ENCODE measurements at regions of chr19 and their contacts with region 1.

Region 1: GRCh38 chr19:12666265-12667048 is at the starts of genes MAN2B1 and WDR83:
- DNase-seq: peak; percentile 76 to 84 (median 78)
- H3K4me3 ChIP-seq: peak within 1 kb of the TSS; percentile 93 to 98 (median 96)
- H3K4me3 Mint-ChIP-seq: peak within 1 kb of the TSS; percentile 95 to 98
- H3K27ac ChIP-seq: peak within 1 kb of the TSS; percentile 76 to 100
- H3K27ac Mint-ChIP-seq: peak within 1 kb of the TSS; percentile 94 to 100 (median 97)
- H3K4me1 ChIP-seq: peaks cover 49 to 61% of the 10 kb centered on the region in 2 donors
- H3K4me1 Mint-ChIP-seq: peaks cover 42% of the 10 kb centered on the region
- H3K27me3 ChIP-seq: no peaks in the 10 kb centered on the region
- H3K27me3 Mint-ChIP-seq: peaks cover 0 to 3% (median 2%) of the 10 kb centered on the region in 3 donors
- CTCF ChIP-seq: no peak
- polyA plus RNA-seq, gene MAN2B1: 218 to 305 (median 295) TPM
- polyA plus RNA-seq, gene WDR83: 7.9 to 9.9 (median 8.5) TPM

Region 2: GRCh38 chr19:12162882-12163806 is 503.3 kb before region 1 on chr19 and contains the start of gene ZNF136:
- intact Hi-C with region 1: loop called in 1 of 2 experiments (anchors 10 kb)
- DNase-seq: peak; percentile 89 to 96 (median 93)
- H3K4me3 ChIP-seq: peak within 1 kb of the TSS; percentile 69 to 95 (median 82)
- H3K4me3 Mint-ChIP-seq: peak within 1 kb of the TSS; percentile 97 to 98
- H3K27ac ChIP-seq: peak within 1 kb of the TSS; percentile 94 to 95
- H3K27ac Mint-ChIP-seq: peak within 1 kb of the TSS; percentile 97 to 99 (median 99)
- H3K4me1 ChIP-seq: peaks cover 14 to 16% of the 10 kb centered on the region in 2 donors
- H3K4me1 Mint-ChIP-seq: peaks cover 32% of the 10 kb centered on the region
- H3K27me3 ChIP-seq: no peaks in the 10 kb centered on the region
- H3K27me3 Mint-ChIP-seq: peaks cover 0 to 2% (median 0%) of the 10 kb centered on the region in 3 donors
- CTCF ChIP-seq: no peak
- polyA plus RNA-seq, gene ZNF136: 3.4 to 6.4 (median 5.8) TPM

Region 3: GRCh38 chr19:12345197-12345596 is 321.3 kb before region 1 on chr19:
- intact Hi-C with region 1: no loop called
- DNase-seq: no peak
- H3K4me3 ChIP-seq: no peak overlapping the region
- H3K4me3 Mint-ChIP-seq: no peak overlapping the region
- H3K27ac ChIP-seq: no peak overlapping the region
- H3K27ac Mint-ChIP-seq: no peak overlapping the region
- H3K4me1 ChIP-seq: no peaks in the 10 kb centered on the region
- H3K4me1 Mint-ChIP-seq: no peaks in the 10 kb centered on the region
- H3K27me3 ChIP-seq: no peaks in the 10 kb centered on the region
- H3K27me3 Mint-ChIP-seq: peaks cover 0 to 1% (median 0%) of the 10 kb centered on the region in 3 donors
- CTCF ChIP-seq: no peak

Region 4: DNA sequence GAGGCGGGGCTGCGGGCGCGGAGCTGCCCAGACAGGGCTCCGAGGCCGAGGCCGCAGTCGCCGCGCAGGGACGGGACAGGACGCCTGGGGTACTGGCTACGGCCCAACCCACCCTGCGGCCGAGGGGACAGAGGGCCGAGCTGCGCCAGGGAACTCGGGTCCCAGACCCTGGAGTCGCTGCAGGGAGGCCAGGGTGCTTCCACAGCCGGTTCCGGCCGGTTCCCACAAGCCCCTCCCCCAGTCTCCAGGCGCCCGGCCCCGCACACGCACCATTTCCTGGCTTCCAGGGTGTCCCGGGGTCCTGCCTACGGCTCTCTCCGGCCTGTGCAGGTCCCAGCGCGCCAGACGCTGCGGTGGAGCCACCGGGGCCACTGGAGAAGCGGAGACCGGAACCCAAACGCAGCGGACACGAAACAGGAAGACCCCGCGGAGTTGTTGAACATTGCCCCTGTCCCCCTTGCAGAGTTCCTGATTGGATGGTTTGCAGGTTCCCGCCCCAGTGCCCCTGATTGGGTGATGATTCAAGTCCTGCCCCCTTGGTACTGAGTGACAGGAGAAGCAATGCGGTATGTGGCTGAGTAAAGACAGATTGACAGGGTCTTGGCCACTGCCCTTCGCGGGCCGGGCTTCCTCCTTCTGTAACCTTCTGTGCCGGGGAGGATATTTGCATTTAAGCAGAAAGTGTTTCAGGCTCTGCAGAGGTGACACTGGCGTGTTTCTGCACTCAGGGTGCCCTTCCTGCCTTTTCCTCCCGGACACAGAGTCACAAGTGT is 115.2 kb before region 1 on chr19 and contains the start of gene ZNF564:
- intact Hi-C with region 1: loop called in 1 of 2 experiments (anchors 2 kb)
- DNase-seq: peak; percentile 92 to 96 (median 93)
- H3K4me3 ChIP-seq: peak within 1 kb of the TSS; percentile 64 to 93 (median 83)
- H3K4me3 Mint-ChIP-seq: peak within 1 kb of the TSS; percentile 97 to 99
- H3K27ac ChIP-seq: peak within 1 kb of the TSS; percentile 91 to 93
- H3K27ac Mint-ChIP-seq: peak within 1 kb of the TSS; percentile 91 to 97 (median 96)
- H3K4me1 ChIP-seq: peaks cover 15 to 26% of the 10 kb centered on the region in 2 donors
- H3K4me1 Mint-ChIP-seq: peaks cover 30% of the 10 kb centered on the region
- H3K27me3 ChIP-seq: no peaks in the 10 kb centered on the region
- H3K27me3 Mint-ChIP-seq: peaks cover 0 to 8% (median 7%) of the 10 kb centered on the region in 3 donors
- CTCF ChIP-seq: no peak
- polyA plus RNA-seq, gene ZNF564: 1.0 to 8.4 (median 8.4) TPM

Region 5: GRCh38 chr19:12610540-12611360 is 55.7 kb before region 1 on chr19 and contains the starts of genes ZNF490 and ZNF791:
- intact Hi-C with region 1: loop called (anchors 5 to 10 kb)
- DNase-seq: peak; percentile 94 to 98 (median 95)
- H3K4me3 ChIP-seq: peak within 1 kb of the TSS; percentile 92 to 98 (median 94)
- H3K4me3 Mint-ChIP-seq: peak within 1 kb of the TSS; percentile 96 to 99
- H3K27ac ChIP-seq: peak within 1 kb of the TSS; percentile 86 to 94
- H3K27ac Mint-ChIP-seq: peak within 1 kb of the TSS; percentile 96 to 100 (median 98)
- H3K4me1 ChIP-seq: peaks cover 37 to 40% of the 10 kb centered on the region in 2 donors
- H3K4me1 Mint-ChIP-seq: peaks cover 37% of the 10 kb centered on the region
- H3K27me3 ChIP-seq: no peaks in the 10 kb centered on the region
- H3K27me3 Mint-ChIP-seq: peaks cover 2 to 6% (median 4%) of the 10 kb centered on the region in 3 donors
- CTCF ChIP-seq: no peak
- polyA plus RNA-seq, gene ZNF490: 2.3 to 4.2 (median 2.7) TPM
- polyA plus RNA-seq, gene ZNF791: 5.2 to 8.2 (median 5.9) TPM

Region 6: GRCh38 chr19:12681074-12681951 is 14.9 kb after region 1 on chr19 and contains the start of gene DHPS:
- intact Hi-C with region 1: loop called in 1 of 2 experiments (anchors 2 kb)
- DNase-seq: peak; percentile 97 to 99 (median 98)
- H3K4me3 ChIP-seq: peak within 1 kb of the TSS; percentile 70 to 88 (median 70)
- H3K4me3 Mint-ChIP-seq: peak within 1 kb of the TSS; percentile 96 to 98
- H3K27ac ChIP-seq: peak within 1 kb of the TSS; percentile 93 to 94
- H3K27ac Mint-ChIP-seq: peak within 1 kb of the TSS; percentile 93 to 99 (median 97)
- H3K4me1 ChIP-seq: peaks cover 16 to 26% of the 10 kb centered on the region in 2 donors
- H3K4me1 Mint-ChIP-seq: peaks cover 19% of the 10 kb centered on the region
- H3K27me3 ChIP-seq: no peaks in the 10 kb centered on the region
- H3K27me3 Mint-ChIP-seq: peaks cover 0 to 6% (median 0%) of the 10 kb centered on the region in 3 donors
- CTCF ChIP-seq: no peak
- polyA plus RNA-seq, gene DHPS: 51.0 to 130 (median 53.4) TPM

Region 7: DNA sequence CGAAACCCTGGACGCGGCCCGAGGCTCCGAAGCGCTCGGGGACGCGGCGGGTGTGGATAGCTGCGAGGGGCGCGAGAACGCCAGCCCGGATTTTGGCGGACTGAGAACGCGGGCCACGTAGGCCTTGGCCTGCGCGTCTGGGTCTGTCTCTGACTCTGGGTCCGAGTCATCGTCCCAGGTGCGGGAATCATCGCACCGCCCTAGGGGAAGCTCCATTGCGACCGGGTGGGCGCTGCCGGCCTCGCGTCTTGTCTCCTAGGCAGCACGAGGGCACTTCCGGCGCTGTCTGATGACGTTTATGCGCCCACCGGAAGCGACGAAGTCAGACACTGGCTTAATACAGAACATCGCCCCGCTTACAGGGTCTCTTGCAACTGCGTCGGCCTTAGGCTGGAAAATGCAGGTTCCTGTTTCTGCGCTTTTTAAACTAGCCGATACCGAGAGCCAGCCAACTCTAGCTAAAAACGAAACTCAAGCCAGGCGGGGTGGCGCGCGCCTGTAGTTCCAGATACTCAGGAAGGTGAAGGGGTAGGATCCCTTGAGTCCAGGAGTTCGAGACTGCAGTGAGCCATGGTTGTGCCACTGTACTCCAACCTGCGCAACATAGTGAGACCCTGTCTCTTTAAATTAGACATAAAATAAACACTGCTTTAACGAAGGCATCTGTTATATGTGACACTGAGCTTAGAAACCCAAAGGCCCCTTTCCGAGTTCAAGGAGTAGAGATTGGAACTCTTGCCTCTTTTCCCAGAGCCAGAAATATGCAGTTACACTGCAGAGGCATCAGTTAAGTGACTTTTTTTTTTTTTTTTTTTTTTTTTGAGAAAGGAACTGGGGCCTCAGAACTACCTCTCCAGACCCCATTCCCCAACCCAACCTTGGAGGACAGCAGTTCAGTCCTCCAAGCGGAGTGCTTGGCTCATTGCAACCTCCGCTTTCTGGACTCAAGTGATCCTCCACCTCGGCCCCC is 30.2 kb after region 1 on chr19 and contains the start of gene FBXW9:
- intact Hi-C with region 1: loop called in 1 of 2 experiments (anchors 1 kb)
- DNase-seq: peak; percentile 98
- H3K4me3 ChIP-seq: peak within 1 kb of the TSS; percentile 63 to 95 (median 84)
- H3K4me3 Mint-ChIP-seq: peak within 1 kb of the TSS; percentile 82 to 93
- H3K27ac ChIP-seq: peak within 1 kb of the TSS; percentile 90 to 95
- H3K27ac Mint-ChIP-seq: peak within 1 kb of the TSS; percentile 92 to 98 (median 96)
- H3K4me1 ChIP-seq: peaks cover 29 to 32% of the 10 kb centered on the region in 2 donors
- H3K4me1 Mint-ChIP-seq: peaks cover 17% of the 10 kb centered on the region
- H3K27me3 ChIP-seq: no peaks in the 10 kb centered on the region
- H3K27me3 Mint-ChIP-seq: no peaks in the 10 kb centered on the region
- CTCF ChIP-seq: no peak
- polyA plus RNA-seq, gene FBXW9: 4.4 to 7.2 (median 5.1) TPM

Region 8: DNA sequence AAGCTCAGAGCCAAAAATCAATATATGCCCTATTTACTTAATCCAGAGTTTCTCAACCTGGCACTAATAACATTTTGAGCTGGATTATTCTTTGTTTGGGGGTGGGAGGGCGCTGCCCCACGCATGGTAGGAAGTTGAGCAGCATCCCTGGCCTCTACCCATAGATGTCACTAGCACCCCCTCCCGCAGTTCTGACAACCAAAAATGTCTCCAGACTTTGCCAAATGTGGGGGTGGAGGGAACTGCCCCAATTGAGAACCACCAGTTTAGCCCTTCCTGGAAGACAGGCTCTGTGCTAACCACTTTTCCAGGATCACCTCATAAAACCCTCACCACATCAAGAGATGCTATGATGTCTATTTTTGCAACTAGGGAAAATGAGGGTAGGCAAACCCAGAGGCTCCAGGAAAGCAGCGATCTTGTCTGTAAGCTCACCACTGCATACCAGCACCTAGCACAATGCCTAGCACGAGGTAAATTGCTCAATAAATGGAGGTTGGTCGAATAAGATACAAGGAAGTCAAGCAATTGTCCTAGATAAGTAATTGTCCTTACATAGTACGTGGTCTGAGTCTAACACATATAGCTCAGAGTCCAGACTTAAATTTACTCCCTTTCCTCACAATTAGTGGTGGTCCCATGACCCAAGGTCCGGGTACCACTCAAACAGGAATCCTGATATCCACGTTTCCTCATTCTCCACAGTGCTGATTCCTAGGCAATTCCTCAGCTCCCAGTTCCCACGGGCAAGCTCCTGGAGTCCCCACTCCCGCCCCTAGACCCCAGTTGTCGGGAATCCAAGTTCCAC is 67.1 kb after region 1 on chr19:
- intact Hi-C with region 1: no loop called
- DNase-seq: peak in 2 of 3 donors; percentile 8 to 39
- H3K4me3 ChIP-seq: peak overlapping the region; percentile 80 to 96 (median 88)
- H3K4me3 Mint-ChIP-seq: peak overlapping the region; percentile 88 to 93
- H3K27ac ChIP-seq: peak overlapping the region; percentile 66 to 88
- H3K27ac Mint-ChIP-seq: peak overlapping the region; percentile 88 to 98 (median 95)
- H3K4me1 ChIP-seq: peaks cover 50 to 67% of the 10 kb centered on the region in 2 donors
- H3K4me1 Mint-ChIP-seq: peaks cover 55% of the 10 kb centered on the region
- H3K27me3 ChIP-seq: no peaks in the 10 kb centered on the region
- H3K27me3 Mint-ChIP-seq: peaks cover 0 to 4% (median 2%) of the 10 kb centered on the region in 3 donors
- CTCF ChIP-seq: peak; percentile 30

Region 9: DNA sequence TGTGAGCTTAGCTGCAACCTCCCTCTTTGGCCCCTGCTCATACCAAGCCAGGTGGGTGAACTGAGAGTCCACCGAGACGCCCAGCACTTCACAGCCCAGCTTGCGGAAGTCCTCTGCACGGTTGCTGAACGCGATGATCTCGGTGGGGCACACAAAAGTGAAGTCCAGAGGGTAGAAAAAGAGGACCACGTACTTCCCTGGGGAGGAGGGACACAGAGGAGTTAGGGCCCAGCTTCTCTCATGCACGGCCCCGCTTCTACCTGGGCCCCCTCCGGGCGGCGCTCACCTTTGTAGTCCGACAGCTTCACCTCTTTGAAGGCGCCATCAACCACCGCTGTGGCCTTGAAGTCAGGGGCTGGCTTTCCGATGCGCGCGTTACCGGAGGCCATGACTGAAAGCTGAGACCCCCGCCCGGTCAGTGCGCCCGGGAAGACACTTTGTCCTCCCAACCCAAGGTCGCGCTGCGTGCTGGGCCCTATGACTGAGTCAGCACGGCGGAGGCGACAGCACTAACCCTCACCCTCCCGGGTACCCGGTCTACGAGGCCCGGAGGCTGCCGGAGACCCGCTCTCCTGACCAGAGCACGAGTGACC is 134.5 kb after region 1 on chr19:
- intact Hi-C with region 1: no loop called
- DNase-seq: peak in 1 of 3 donors; percentile 32
- H3K4me3 ChIP-seq: peak overlapping the region; percentile 44 to 81 (median 45)
- H3K4me3 Mint-ChIP-seq: peak overlapping the region; percentile 82 to 91
- H3K27ac ChIP-seq: no peak overlapping the region
- H3K27ac Mint-ChIP-seq: peak overlapping the region in 2 of 7 donors; percentile 25 to 43
- H3K4me1 ChIP-seq: peaks cover 25 to 32% of the 10 kb centered on the region in 2 donors
- H3K4me1 Mint-ChIP-seq: peaks cover 28% of the 10 kb centered on the region
- H3K27me3 ChIP-seq: peaks cover 4 to 34% of the 10 kb centered on the region in 2 donors
- H3K27me3 Mint-ChIP-seq: peaks cover 14 to 31% (median 25%) of the 10 kb centered on the region in 3 donors
- CTCF ChIP-seq: no peak

Region 10: GRCh38 chr19:13022859-13023636 is 356.6 kb after region 1 on chr19:
- intact Hi-C with region 1: no loop called
- DNase-seq: no peak
- H3K4me3 ChIP-seq: peak overlapping the region; percentile 33 to 81 (median 39)
- H3K4me3 Mint-ChIP-seq: peak overlapping the region; percentile 85 to 92
- H3K27ac ChIP-seq: no peak overlapping the region
- H3K27ac Mint-ChIP-seq: peak overlapping the region in 2 of 7 donors; percentile 11 to 28
- H3K4me1 ChIP-seq: peaks cover 24 to 36% of the 10 kb centered on the region in 2 donors
- H3K4me1 Mint-ChIP-seq: peaks cover 33% of the 10 kb centered on the region
- H3K27me3 ChIP-seq: peaks cover 10 to 23% of the 10 kb centered on the region in 2 donors
- H3K27me3 Mint-ChIP-seq: peaks cover 37 to 42% (median 39%) of the 10 kb centered on the region in 3 donors
- CTCF ChIP-seq: no peak

Measured in CD14-positive monocyte (primary cell).